ENCODE measurements at regions of chr21 and their contacts with region 1.

Region 1: DNA sequence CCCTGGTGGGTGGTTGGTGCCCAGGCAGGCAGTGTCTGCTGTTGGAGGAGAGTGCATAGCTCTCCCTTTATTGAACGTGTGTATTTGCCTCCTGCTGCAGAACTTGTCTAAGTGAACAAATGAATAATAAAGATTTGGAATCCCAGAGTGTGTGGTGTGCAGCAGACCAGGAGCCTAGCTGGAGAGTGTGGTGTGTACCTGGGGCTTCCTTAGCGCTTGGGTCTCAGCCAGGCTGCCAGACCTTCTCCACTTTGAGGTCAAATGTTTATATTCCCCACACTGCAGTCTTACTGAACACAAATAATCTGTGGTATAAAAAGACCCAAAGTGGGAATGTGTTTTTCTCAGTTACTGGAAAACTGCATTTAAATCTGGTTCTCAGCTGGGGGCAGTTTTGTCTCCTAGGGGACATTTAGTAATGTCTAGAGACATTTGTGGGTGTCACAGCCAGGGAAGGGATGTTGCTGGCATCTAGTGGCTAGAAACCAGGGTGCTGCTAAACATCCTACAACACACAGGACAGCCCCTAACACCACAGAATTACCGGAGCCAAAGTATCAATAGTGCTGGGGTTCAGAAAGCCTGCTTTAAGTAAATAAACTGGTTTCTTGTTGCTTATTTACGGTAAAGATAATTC is 23.6 kb downstream of the SLC37A1 start:
- DNase-seq: peak in 2 of 4 experiments; percentile 36 to 48
- ATAC-seq: peak; percentile 63
- H3K4me3 ChIP-seq: no peak overlapping the region
- H3K27ac ChIP-seq: no peak overlapping the region
- H3K4me1 ChIP-seq: peaks cover 9 to 10% of the 10 kb centered on the region in 2 experiments
- H3K27me3 ChIP-seq: peaks cover 48 to 67% of the 10 kb centered on the region in 2 experiments
- CTCF ChIP-seq: peak; percentile 68 to 78 (median 68)
- EP300 ChIP-seq: no peak
- POLR2A ChIP-seq: no peak
- RAD21 ChIP-seq: peak; percentile 68 to 76

Region 2: DNA sequence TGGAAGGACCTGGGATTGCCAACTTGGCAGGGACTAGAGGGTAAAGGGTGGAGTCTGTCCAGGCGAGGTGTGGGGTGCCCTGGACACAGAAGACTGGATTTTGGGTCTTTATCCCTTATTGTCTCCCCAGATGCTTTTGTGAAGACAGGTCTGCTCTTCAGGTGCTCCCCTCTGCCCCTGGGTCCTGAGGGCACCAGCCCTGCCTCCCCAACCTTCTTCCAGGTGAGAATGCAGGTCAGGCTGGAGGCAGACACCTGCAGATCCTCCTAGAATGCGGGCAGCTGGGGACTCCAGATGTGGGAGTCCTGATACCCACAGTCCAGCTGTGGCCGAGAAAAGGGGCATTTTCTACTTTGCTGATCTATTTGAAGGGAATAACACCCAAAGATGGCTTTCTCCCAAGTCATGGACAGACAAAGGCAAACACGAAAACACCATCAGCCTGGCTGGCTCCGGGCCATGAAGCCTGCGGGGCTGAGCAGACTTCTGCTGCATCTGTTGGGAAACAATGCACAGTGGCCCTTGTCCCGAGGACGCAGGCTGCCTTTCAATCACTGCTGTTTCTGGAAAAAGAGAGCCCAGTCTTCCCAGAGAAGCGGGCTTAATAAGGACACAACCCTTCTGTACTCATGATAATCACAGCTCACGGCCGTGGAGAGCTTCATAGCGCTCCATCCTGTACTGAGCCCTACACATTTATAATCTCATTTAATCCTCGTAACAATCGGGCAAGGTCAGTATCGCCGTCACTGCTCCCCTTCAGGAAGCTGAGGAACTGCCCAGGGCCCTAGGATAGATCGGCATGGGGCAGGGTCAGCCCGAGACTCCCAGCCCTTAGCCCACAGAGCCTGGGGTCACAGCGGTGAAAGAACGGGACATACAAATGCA is 380.3 kb before region 1 on chr21:
- CTCF ChIA-PET with region 1: no interaction called
- POLR2A ChIA-PET with region 1: no interaction called
- in situ Hi-C with region 1: no loop called
- intact Hi-C with region 1: loop called (anchors 10 kb)
- DNase-seq: no peak
- ATAC-seq: no peak; the same call in 2 of the 3 replicates
- H3K4me3 ChIP-seq: no peak overlapping the region
- H3K27ac ChIP-seq: no peak overlapping the region
- H3K4me1 ChIP-seq: no peaks in the 10 kb centered on the region
- H3K27me3 ChIP-seq: peaks cover 20 to 55% of the 10 kb centered on the region in 2 experiments; a peak in 4 of 5 replicates
- CTCF ChIP-seq: no peak
- EP300 ChIP-seq: no peak
- POLR2A ChIP-seq: no peak
- RAD21 ChIP-seq: no peak

Region 3: DNA sequence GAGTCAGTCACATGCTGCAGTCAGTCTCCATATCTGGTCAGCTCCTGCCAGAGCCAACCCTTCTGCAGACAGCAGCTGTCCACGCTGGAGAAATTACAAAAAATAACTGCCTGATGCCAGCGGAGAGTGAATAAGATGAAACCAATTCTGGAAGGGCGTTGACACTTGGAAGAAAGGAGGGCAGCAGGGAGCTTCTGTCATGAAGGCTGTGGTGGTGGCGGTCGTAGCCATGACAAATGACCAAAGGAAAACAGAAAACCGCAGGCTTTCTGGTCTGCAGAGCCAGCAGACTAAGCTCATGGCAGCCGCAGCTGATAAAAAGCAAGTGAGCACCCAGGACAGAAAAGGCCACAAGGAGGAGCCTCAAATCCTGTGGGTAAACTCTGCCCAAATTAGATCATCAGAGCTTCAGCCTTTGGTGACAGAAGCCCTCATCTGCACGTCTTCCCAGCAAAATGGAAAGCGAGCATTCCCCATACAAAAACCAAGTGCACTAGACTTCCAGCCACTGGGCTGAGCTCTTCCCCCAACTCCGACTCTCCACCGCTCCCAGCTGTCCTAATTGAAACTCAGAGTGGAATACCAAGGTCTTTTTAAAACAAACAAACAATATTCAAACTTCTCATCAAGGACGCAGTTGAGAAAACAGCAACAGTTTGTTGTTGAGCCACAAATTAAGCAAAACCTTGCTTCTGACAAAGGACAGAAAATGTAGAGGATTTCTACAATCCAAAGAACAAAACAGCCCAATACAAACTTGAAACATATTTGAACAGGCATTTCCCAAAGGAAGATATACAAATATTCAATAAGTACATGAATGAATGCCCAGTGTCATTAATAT is 69.9 kb before region 1 on chr21:
- CTCF ChIA-PET with region 1: no interaction called
- POLR2A ChIA-PET with region 1: no interaction called
- in situ Hi-C with region 1: no loop called
- intact Hi-C with region 1: loop called (anchors 5 kb)
- DNase-seq: peak; percentile 63 to 78 (median 72)
- ATAC-seq: peak; percentile 81
- H3K4me3 ChIP-seq: no peak overlapping the region
- H3K27ac ChIP-seq: no peak overlapping the region
- H3K4me1 ChIP-seq: peaks cover 32 to 46% of the 10 kb centered on the region in 2 experiments
- H3K27me3 ChIP-seq: peaks cover 14 to 15% of the 10 kb centered on the region in 2 experiments; a peak in 4 of 5 replicates
- CTCF ChIP-seq: peak; percentile 58 to 73 (median 66)
- EP300 ChIP-seq: peak; percentile 31; the same call in 1 of the 2 replicates
- POLR2A ChIP-seq: no peak
- RAD21 ChIP-seq: peak; percentile 64 to 74

Region 4: GRCh38 chr21:42547001-42547905 is 10.0 kb after region 1 on chr21:
- CTCF ChIA-PET with region 1: no interaction called
- POLR2A ChIA-PET with region 1: interaction called, 14 read pairs
- in situ Hi-C with region 1: no loop called
- intact Hi-C with region 1: no loop called
- DNase-seq: peak; percentile 82 to 92 (median 87)
- ATAC-seq: peak; percentile 86
- H3K4me3 ChIP-seq: no peak overlapping the region
- H3K27ac ChIP-seq: peak overlapping the region; percentile 81
- H3K4me1 ChIP-seq: peaks cover 48 to 60% of the 10 kb centered on the region in 2 experiments
- H3K27me3 ChIP-seq: no peaks in the 10 kb centered on the region
- CTCF ChIP-seq: peak in 1 of 3 experiments; percentile 14; a peak in 1 of 6 replicates
- EP300 ChIP-seq: peak; percentile 95
- POLR2A ChIP-seq: no peak
- RAD21 ChIP-seq: peak in 1 of 2 experiments; percentile 23; a peak in 2 of 4 replicates

Region 5: GRCh38 chr21:42593007-42593806 is 56.0 kb after region 1 on chr21:
- CTCF ChIA-PET with region 1: no interaction called
- POLR2A ChIA-PET with region 1: no interaction called
- in situ Hi-C with region 1: no loop called
- intact Hi-C with region 1: loop called (anchors 5 kb)
- DNase-seq: peak; percentile 80 to 94 (median 91)
- ATAC-seq: peak; percentile 99
- H3K4me3 ChIP-seq: no peak overlapping the region
- H3K27ac ChIP-seq: no peak overlapping the region
- H3K4me1 ChIP-seq: peaks cover 0 to 8% of the 10 kb centered on the region in 2 experiments; a peak in 1 of 5 replicates
- H3K27me3 ChIP-seq: peaks cover 54 to 65% of the 10 kb centered on the region in 2 experiments
- CTCF ChIP-seq: peak; percentile 67 to 89 (median 85)
- EP300 ChIP-seq: no peak
- POLR2A ChIP-seq: no peak
- RAD21 ChIP-seq: peak; percentile 73 to 84

Region 6: GRCh38 chr21:42818328-42818749 is 281.1 kb after region 1 on chr21:
- CTCF ChIA-PET with region 1: interaction called, 17 read pairs
- POLR2A ChIA-PET with region 1: no interaction called
- in situ Hi-C with region 1: no loop called
- intact Hi-C with region 1: loop called (anchors 5 kb)
- DNase-seq: peak; percentile 69 to 71 (median 70)
- ATAC-seq: peak; percentile 98
- H3K4me3 ChIP-seq: no peak overlapping the region
- H3K27ac ChIP-seq: no peak overlapping the region
- H3K4me1 ChIP-seq: no peaks in the 10 kb centered on the region
- H3K27me3 ChIP-seq: peaks cover 0 to 15% of the 10 kb centered on the region in 2 experiments; a peak in 3 of 5 replicates
- CTCF ChIP-seq: peak; percentile 86 to 95 (median 91)
- EP300 ChIP-seq: no peak
- POLR2A ChIP-seq: no peak
- RAD21 ChIP-seq: peak; percentile 67 to 92

Measured in K562 (cell line).